A673 (cell line): ENCODE measurements at regions of chr6 and their contacts with region 1.

Region 1: GRCh38 chr6:83757021-83757420 is 48.1 kb upstream of the SNAP91 start:
- DNase-seq: no peak
- H3K4me3 ChIP-seq: no peak overlapping the region
- H3K27ac ChIP-seq: no peak overlapping the region
- H3K4me1 ChIP-seq: no peaks in the 10 kb centered on the region
- H3K27me3 ChIP-seq: peaks cover 8% of the 10 kb centered on the region
- CTCF ChIP-seq: no peak

Region 2: DNA sequence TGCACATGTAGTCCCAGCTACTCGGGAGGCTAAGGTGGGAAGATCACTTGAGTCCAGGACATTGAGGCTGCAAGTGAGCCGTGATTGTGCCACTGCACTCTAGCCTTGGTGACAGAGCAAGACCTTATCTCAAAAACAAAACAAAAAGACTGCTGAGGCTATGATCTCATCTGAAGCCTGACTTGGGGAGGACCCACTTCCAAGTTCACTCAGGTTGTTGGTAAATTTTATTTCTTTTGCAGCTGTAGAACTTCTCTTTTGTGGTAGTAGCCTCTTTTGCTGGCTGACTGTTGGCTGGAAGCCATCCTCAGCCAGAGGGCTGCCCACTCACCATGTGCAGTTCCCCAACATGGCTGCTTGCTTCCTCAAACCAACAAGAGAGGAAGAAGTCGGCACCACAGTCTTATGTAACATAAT is 289.4 kb before region 1 on chr6:
- CTCF ChIA-PET with region 1: no interaction called
- POLR2A ChIA-PET with region 1: no interaction called
- intact Hi-C with region 1: no loop called
- DNase-seq: no peak
- H3K4me3 ChIP-seq: no peak overlapping the region
- H3K27ac ChIP-seq: no peak overlapping the region
- H3K4me1 ChIP-seq: no peaks in the 10 kb centered on the region
- H3K27me3 ChIP-seq: no peaks in the 10 kb centered on the region
- CTCF ChIP-seq: no peak

Region 3: DNA sequence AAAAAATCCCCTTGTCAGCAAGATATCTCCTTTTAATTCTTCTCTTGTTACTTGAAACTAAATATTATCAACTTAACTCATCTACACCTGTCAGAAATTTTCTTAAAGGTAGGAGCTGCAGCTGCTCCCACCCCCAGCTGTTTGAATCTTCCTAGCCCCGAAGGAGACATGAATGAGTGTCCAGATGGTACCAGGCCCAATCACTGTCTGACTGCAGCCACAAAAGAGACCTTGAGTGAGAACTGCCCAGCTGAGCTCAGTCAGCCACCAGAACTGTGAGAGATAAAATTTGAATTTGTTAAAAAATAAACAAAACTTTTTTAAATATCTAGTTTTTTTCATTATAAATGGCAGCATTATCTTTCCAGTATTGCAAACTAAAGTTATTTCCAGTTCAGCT is 160.0 kb before region 1 on chr6:
- CTCF ChIA-PET with region 1: no interaction called
- POLR2A ChIA-PET with region 1: no interaction called
- intact Hi-C with region 1: no loop called
- DNase-seq: no peak
- H3K4me3 ChIP-seq: no peak overlapping the region
- H3K27ac ChIP-seq: no peak overlapping the region
- H3K4me1 ChIP-seq: no peaks in the 10 kb centered on the region
- H3K27me3 ChIP-seq: no peaks in the 10 kb centered on the region
- CTCF ChIP-seq: no peak

Region 4: DNA sequence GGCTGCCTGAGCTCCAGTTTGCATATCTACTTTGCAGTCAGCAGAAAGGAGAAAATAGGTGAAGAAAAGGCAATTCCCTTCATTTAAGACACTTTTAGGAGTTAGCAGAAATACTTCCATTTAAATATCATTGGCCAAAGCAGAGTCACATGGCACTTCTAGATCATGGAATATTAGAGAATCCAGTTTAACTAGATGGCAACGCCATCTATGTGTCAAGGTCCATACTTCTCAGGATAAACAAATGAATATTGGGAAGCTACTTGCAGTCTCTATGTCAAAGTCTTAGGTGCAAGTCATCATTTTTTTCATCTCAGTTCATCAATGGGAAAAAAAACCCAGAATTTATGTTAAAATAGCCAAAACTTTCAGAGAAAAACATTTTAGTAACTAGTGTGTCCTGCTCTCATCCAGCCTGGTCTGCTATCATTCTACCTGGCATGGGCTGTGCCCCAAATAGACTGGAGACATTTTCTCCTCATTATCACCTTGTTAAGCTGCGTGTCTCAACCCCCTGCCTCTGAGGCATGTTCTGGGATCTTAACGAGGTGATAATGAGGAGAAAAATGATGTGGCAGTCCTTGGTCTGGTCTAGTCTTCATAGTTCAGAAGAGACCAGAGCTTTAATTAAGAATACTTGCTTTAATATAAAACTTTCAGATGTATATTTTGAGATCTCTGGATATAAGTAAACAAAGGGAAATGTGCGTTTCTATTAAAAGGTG is 780.1 kb after region 1 on chr6:
- CTCF ChIA-PET with region 1: no interaction called
- POLR2A ChIA-PET with region 1: interaction called, 10 read pairs
- intact Hi-C with region 1: no loop called
- DNase-seq: no peak
- H3K4me3 ChIP-seq: no peak overlapping the region
- H3K27ac ChIP-seq: no peak overlapping the region
- H3K4me1 ChIP-seq: no peaks in the 10 kb centered on the region
- H3K27me3 ChIP-seq: no peaks in the 10 kb centered on the region
- CTCF ChIP-seq: 0 out of 2 replicates have a peak, but pooled peaks have one; percentile 16